ENCODE measurements at regions of chrX and their contacts with region 1.

Region 1: GRCh38 chrX:41870719-41871151 is 52.6 kb downstream of the CASK start:
- DNase-seq: no peak
- H3K4me3 ChIP-seq: no peak overlapping the region
- H3K27ac ChIP-seq: no peak overlapping the region
- H3K4me1 ChIP-seq: no peaks in the 10 kb centered on the region
- H3K27me3 ChIP-seq: no peaks in the 10 kb centered on the region
- CTCF ChIP-seq: no peak

Region 2: GRCh38 chrX:41580423-41581064 is 290.2 kb before region 1 on chrX:
- CTCF ChIA-PET with region 1: no interaction called
- POLR2A ChIA-PET with region 1: interaction called, 18 read pairs
- intact Hi-C with region 1: no loop called
- DNase-seq: no peak
- H3K4me3 ChIP-seq: no peak overlapping the region
- H3K27ac ChIP-seq: no peak overlapping the region
- H3K4me1 ChIP-seq: no peaks in the 10 kb centered on the region
- H3K27me3 ChIP-seq: no peaks in the 10 kb centered on the region
- CTCF ChIP-seq: no peak

Measured in A673 (cell line).